ENCODE measurements at regions of chr3 and their contacts with region 1.

Region 1: DNA sequence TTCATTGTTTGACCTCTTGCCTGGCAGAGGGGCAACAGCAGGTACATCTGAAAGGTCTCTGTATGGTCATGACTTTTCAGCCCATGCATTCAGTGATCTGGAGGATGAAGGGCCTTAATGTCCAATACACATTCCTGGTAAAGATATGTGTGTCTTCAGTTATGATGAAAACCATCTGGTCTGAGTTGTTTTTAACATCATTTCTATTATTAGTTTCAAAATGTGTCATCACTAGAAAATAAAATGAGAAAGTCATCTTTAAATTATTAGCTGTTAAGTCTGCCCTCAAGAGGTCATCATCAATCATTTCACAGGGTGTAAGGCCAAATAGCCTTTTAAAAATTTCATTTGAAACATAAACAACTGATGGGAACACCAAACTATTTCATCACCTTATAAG is 92.1 kb upstream of the PLSCR4 start:
- DNase-seq: no peak
- ATAC-seq: no peak
- H3K4me3 ChIP-seq: no peak overlapping the region
- H3K27ac ChIP-seq: no peak overlapping the region
- H3K4me1 ChIP-seq: no peaks in the 10 kb centered on the region
- H3K27me3 ChIP-seq: no peaks in the 10 kb centered on the region
- CTCF ChIP-seq: no peak

Region 2: GRCh38 chr3:146883288-146883687 is 540.3 kb after region 1 on chr3:
- CTCF ChIA-PET with region 1: no interaction called
- POLR2A ChIA-PET with region 1: interaction called, 14 read pairs
- in situ Hi-C with region 1: no loop called
- intact Hi-C with region 1: no loop called
- DNase-seq: no peak
- ATAC-seq: no peak
- H3K4me3 ChIP-seq: no peak overlapping the region
- H3K27ac ChIP-seq: no peak overlapping the region
- H3K4me1 ChIP-seq: no peaks in the 10 kb centered on the region
- H3K27me3 ChIP-seq: no peaks in the 10 kb centered on the region
- CTCF ChIP-seq: no peak